ENCODE measurements at regions of chr14 and their contacts with region 1.

Region 1: GRCh38 chr14:42391162-42391834 is 784.6 kb downstream of the LRFN5 start:
- DNase-seq: no peak
- ATAC-seq: no peak
- H3K4me3 ChIP-seq: no peak overlapping the region
- H3K27ac ChIP-seq: no peak overlapping the region
- H3K4me1 ChIP-seq: no peaks in the 10 kb centered on the region
- H3K27me3 ChIP-seq: no peaks in the 10 kb centered on the region
- CTCF ChIP-seq: no peak

Region 2: DNA sequence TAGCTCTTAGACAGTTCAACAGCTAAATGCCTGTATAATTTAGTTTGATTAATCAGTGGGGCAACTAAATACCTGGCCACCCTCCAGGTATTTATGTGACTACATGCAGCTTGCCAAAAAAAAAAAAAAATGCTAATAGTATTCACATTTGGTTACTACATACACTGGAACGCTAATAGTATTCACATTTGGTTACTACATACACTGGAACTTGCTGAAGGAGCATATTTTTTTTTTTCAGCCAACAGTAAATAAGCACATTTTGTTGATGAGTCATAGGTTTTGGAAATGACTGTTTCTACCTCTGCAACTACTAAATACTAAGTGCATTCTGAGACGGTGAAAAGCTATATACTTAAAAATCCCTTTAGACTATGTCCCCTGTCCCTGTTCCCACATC is 387.7 kb after region 1 on chr14:
- CTCF ChIA-PET with region 1: no interaction called
- POLR2A ChIA-PET with region 1: interaction called, 16 read pairs
- intact Hi-C with region 1: no loop called
- DNase-seq: peak; percentile 50
- ATAC-seq: peak; percentile 87
- H3K4me3 ChIP-seq: no peak overlapping the region
- H3K27ac ChIP-seq: no peak overlapping the region
- H3K4me1 ChIP-seq: no peaks in the 10 kb centered on the region
- H3K27me3 ChIP-seq: no peaks in the 10 kb centered on the region
- CTCF ChIP-seq: no peak

Measured in PC-3 (cell line).